ENCODE measurements at regions of chr7 and their contacts with region 1.

Region 1: GRCh38 chr7:114819616-114820362 is 102.1 kb upstream of the MDFIC start:
- DNase-seq: peak; percentile 99
- H3K4me3 Mint-ChIP-seq: peak overlapping the region; percentile 25
- H3K27ac Mint-ChIP-seq: peak overlapping the region; percentile 93
- H3K4me1 Mint-ChIP-seq: peaks cover 34% of the 10 kb centered on the region
- H3K27me3 Mint-ChIP-seq: no peaks in the 10 kb centered on the region
- CTCF ChIP-seq: no peak

Region 2: GRCh38 chr7:114759347-114760062 is 60.3 kb before region 1 on chr7:
- CTCF ChIA-PET with region 1: no interaction called
- POLR2A ChIA-PET with region 1: interaction called, 3 read pairs
- intact Hi-C with region 1: loop called (anchors 2 kb)
- DNase-seq: peak; percentile 41
- H3K4me3 Mint-ChIP-seq: peak overlapping the region; percentile 7
- H3K27ac Mint-ChIP-seq: peak overlapping the region; percentile 60
- H3K4me1 Mint-ChIP-seq: peaks cover 20% of the 10 kb centered on the region
- H3K27me3 Mint-ChIP-seq: no peaks in the 10 kb centered on the region
- CTCF ChIP-seq: no peak

Region 3: DNA sequence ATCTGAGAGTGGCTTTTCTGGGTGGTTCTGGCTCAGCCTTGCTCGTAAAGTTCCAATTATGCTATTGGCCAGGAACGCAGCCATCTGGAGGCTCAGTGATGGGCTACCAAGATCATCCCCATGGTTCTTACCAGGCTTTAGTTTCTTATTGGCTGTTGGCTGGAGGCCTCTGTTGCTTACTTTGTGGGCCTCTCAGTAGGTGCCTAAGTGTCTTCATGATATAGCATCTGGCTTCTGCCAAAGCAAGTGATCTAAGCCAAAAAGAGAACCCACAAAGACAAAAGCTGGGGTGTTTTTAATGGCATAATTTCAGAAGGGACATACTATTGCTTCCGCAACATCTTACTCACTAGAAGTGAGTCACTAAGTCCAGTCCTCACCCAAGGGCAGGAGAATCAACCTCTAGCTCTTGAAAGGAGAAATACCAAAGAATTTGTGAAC is 29.9 kb before region 1 on chr7:
- CTCF ChIA-PET with region 1: interaction called, 3 read pairs
- POLR2A ChIA-PET with region 1: interaction called, 7 read pairs
- intact Hi-C with region 1: loop called (anchors 2 kb)
- DNase-seq: peak; percentile 89
- H3K4me3 Mint-ChIP-seq: no peak overlapping the region
- H3K27ac Mint-ChIP-seq: peak overlapping the region; percentile 66
- H3K4me1 Mint-ChIP-seq: peaks cover 31% of the 10 kb centered on the region
- H3K27me3 Mint-ChIP-seq: no peaks in the 10 kb centered on the region
- CTCF ChIP-seq: no peak

Region 4: GRCh38 chr7:114843102-114843501 is 23.3 kb after region 1 on chr7:
- CTCF ChIA-PET with region 1: no interaction called
- POLR2A ChIA-PET with region 1: no interaction called
- intact Hi-C with region 1: no loop called
- DNase-seq: no peak
- H3K4me3 Mint-ChIP-seq: no peak overlapping the region
- H3K27ac Mint-ChIP-seq: no peak overlapping the region
- H3K4me1 Mint-ChIP-seq: no peaks in the 10 kb centered on the region
- H3K27me3 Mint-ChIP-seq: no peaks in the 10 kb centered on the region
- CTCF ChIP-seq: no peak

Region 5: GRCh38 chr7:115356139-115356746 is 536.5 kb after region 1 on chr7:
- CTCF ChIA-PET with region 1: no interaction called
- POLR2A ChIA-PET with region 1: no interaction called
- intact Hi-C with region 1: no loop called
- DNase-seq: peak; percentile 8
- H3K4me3 Mint-ChIP-seq: no peak overlapping the region
- H3K27ac Mint-ChIP-seq: no peak overlapping the region
- H3K4me1 Mint-ChIP-seq: no peaks in the 10 kb centered on the region
- H3K27me3 Mint-ChIP-seq: peaks cover 62% of the 10 kb centered on the region
- CTCF ChIP-seq: peak; percentile 45